ENCODE measurements at regions of chr4 and their contacts with region 1.

Region 1: DNA sequence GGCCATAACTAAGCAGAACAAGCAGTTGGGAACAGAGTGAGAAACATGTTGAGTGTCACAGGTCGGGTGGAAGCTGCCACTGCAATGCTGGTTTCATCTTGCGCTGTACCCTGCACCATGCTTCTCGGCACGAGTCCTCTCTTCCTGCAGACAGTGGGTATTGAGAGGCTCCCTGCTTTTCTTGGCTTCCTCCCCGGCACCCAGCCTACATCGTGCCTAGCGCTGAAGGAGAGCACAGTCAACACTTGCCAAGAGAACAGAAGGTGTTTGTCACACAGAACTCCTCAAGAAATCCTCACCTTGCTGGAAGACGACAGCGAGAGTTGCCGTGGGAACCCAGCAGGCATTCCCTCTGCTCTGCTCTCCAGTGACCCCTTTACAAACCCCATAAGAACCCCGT is 53.6 kb downstream of the EVC2 start:
- DNase-seq: no peak
- ATAC-seq: no peak
- H3K4me3 ChIP-seq: no peak overlapping the region
- H3K27ac ChIP-seq: no peak overlapping the region
- H3K4me1 ChIP-seq: no peaks in the 10 kb centered on the region
- H3K27me3 ChIP-seq: no peaks in the 10 kb centered on the region
- CTCF ChIP-seq: no peak
- POLR2A ChIP-seq: no peak
- RAD21 ChIP-seq: no peak

Region 2: GRCh38 chr4:5488413-5488812 is 166.4 kb before region 1 on chr4:
- CTCF ChIA-PET with region 1: no interaction called
- POLR2A ChIA-PET with region 1: no interaction called
- dilution Hi-C with region 1: no loop called
- in situ Hi-C with region 1: no loop called
- intact Hi-C with region 1: no loop called
- DNase-seq: no peak
- ATAC-seq: no peak
- H3K4me3 ChIP-seq: no peak overlapping the region
- H3K27ac ChIP-seq: no peak overlapping the region
- H3K4me1 ChIP-seq: no peaks in the 10 kb centered on the region
- H3K27me3 ChIP-seq: no peaks in the 10 kb centered on the region
- CTCF ChIP-seq: no peak
- POLR2A ChIP-seq: no peak
- RAD21 ChIP-seq: no peak

Region 3: GRCh38 chr4:5693871-5694270 is 39.1 kb after region 1 on chr4:
- CTCF ChIA-PET with region 1: no interaction called
- POLR2A ChIA-PET with region 1: no interaction called
- dilution Hi-C with region 1: no loop called
- in situ Hi-C with region 1: no loop called
- intact Hi-C with region 1: loop called (anchors 5 kb)
- DNase-seq: peak; percentile 28
- ATAC-seq: peak; percentile 24; the same call in 1 of the 2 replicates
- H3K4me3 ChIP-seq: no peak overlapping the region
- H3K27ac ChIP-seq: no peak overlapping the region
- H3K4me1 ChIP-seq: no peaks in the 10 kb centered on the region
- H3K27me3 ChIP-seq: no peaks in the 10 kb centered on the region
- CTCF ChIP-seq: no peak
- POLR2A ChIP-seq: no peak
- RAD21 ChIP-seq: no peak